ENCODE measurements at regions of chr12 and their contacts with region 1.

Region 1: DNA sequence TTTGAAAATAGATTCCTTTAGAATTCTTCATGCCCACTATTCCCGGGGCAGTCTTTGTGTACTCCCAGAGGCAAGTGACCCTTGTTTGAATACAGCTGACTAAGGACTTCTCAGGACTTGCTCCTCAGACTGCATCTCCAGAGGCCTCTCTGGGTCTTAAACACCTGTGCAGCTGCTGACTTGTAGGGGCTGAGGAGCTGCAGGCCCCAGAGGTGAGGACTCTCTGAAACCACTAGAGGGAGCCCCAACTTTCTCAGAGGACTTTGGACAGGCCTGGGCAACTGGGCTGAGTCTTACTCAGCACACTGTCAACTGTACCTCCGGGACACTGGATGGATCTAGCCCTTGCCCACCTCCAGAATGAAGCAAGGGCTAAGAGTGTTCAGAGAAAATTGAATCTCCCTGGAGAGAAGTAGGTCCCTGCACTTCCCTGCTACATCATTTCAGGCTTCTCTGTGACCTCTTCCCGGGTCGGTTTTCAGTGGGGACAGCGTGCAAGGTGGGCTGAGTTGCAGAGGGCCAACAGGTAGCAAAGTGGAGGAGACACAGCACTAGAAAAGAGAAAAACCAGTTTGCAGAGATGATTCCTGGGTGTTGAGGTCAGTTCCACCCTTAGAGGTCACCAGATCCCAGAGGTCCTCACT is 164.6 kb downstream of the TMEM117 start:
- DNase-seq: peak; percentile 76
- H3K4me3 Mint-ChIP-seq: no peak overlapping the region
- H3K27ac Mint-ChIP-seq: no peak overlapping the region
- H3K4me1 Mint-ChIP-seq: no peaks in the 10 kb centered on the region
- H3K27me3 Mint-ChIP-seq: no peaks in the 10 kb centered on the region
- CTCF ChIP-seq: peak; percentile 43

Region 2: DNA sequence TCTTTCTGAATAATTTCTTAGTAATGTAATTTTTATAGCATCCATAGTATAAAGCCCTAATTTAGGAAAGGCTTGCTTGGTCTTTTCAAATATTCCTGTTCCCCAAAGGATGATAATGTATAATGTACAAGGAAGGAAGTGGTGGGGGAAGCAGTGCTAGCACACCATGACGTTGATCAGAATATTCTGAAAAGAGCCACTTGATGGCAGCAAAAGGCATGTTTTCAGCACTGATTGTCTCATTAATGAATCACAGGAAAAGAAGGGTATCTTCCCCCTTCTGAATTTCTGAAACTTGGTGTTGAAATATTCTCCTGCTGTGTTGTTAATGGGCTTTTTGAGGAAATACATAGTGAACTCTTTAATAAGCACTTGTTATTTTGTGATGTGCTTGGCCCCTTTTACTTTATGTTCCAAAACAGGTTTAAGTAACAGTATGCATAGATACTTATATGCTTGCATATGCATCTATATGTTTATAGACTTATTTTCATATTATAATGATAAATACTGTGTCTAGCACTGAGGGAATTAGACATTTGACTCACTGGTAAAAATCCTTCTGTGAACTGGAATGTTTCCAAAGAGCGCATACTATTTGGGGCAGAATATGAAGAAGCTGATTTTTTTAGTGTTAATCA is 42.6 kb before region 1 on chr12:
- CTCF ChIA-PET with region 1: interaction called, 6 read pairs
- POLR2A ChIA-PET with region 1: no interaction called
- intact Hi-C with region 1: loop called (anchors 5 kb)
- DNase-seq: peak; percentile 66
- H3K4me3 Mint-ChIP-seq: no peak overlapping the region
- H3K27ac Mint-ChIP-seq: no peak overlapping the region
- H3K4me1 Mint-ChIP-seq: no peaks in the 10 kb centered on the region
- H3K27me3 Mint-ChIP-seq: no peaks in the 10 kb centered on the region
- CTCF ChIP-seq: peak; percentile 49

Measured in MCF 10A (cell line).